CD4-positive, alpha-beta T cell (primary cell): ENCODE measurements at regions of chr10 and their contacts with region 1.

Region 1: GRCh38 chr10:97498076-97498840 is at the start of gene MMS19:
- DNase-seq: peak; percentile 98 to 100 (median 99)
- ATAC-seq: peak; percentile 72
- H3K4me3 ChIP-seq: peak within 1 kb of the TSS; percentile 91
- H3K4me3 Mint-ChIP-seq: peak within 1 kb of the TSS; percentile 99
- H3K27ac ChIP-seq: peak within 1 kb of the TSS; percentile 75 to 83
- H3K27ac Mint-ChIP-seq: peak within 1 kb of the TSS; percentile 91
- H3K4me1 ChIP-seq: peaks cover 42% of the 10 kb centered on the region
- H3K4me1 Mint-ChIP-seq: peaks cover 52% of the 10 kb centered on the region
- H3K27me3 ChIP-seq: peaks cover 0 to 2% of the 10 kb centered on the region in 2 experiments
- H3K27me3 Mint-ChIP-seq: peaks cover 15% of the 10 kb centered on the region
- CTCF ChIP-seq: no peak
- total RNA-seq, gene MMS19: 58.4 to 65.7 TPM

Region 2: DNA sequence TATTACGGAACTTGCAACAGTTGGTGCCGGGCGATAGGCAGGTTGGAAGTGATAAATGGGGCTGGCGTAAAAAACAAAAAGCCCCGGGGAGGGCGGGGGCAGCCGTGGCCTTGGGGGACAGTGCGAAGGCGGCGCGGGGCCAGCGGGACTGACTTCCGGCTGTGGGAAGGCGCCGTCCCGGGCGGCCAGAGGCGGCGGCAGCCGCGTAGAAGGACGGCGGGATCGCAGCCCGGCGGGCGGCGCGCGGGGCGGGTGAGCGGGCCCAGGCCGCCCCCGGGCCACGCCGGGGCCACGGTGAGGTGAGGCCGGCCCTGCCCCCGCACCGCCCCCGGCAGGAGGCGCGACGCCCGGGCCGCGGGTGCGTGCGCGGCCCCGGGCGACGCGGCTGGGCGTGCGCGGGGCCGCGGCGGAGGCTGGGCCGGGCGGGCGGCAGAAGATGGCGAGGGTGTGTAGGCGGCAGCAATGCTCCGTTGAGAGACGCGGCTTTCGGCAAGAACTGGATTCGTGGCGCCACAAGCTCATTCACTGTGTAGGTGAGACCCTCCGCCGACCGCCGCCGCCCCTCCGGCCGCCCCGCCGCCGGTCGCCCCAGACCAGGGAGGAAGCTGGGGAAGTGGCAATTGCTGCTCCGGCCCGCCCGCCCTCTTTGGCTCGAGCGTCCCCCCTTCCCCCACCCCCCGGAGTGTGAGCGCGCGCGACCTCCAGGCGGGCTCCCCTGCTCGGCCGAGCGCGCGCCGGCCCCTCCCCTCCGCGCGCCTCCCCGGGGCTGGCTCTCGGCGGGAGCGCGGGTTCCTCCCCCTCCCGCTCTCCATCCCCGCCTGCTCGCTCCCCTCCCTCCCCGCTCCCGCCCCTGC is 666.2 kb before region 1 on chr10 and contains the start of gene LCOR:
- CTCF ChIA-PET with region 1: no interaction called
- POLR2A ChIA-PET with region 1: no interaction called
- intact Hi-C with region 1: loop called in 1 of 2 experiments (anchors 5 kb)
- DNase-seq: peak; percentile 62 to 94 (median 78)
- ATAC-seq: peak; percentile 65
- H3K4me3 ChIP-seq: peak within 1 kb of the TSS; percentile 71
- H3K4me3 Mint-ChIP-seq: peak within 1 kb of the TSS; percentile 94
- H3K27ac ChIP-seq: peak within 1 kb of the TSS; percentile 78 to 80
- H3K27ac Mint-ChIP-seq: peak within 1 kb of the TSS; percentile 94
- H3K4me1 ChIP-seq: peaks cover 12% of the 10 kb centered on the region
- H3K4me1 Mint-ChIP-seq: peaks cover 54% of the 10 kb centered on the region
- H3K27me3 ChIP-seq: no peaks in the 10 kb centered on the region
- H3K27me3 Mint-ChIP-seq: no peaks in the 10 kb centered on the region
- CTCF ChIP-seq: no peak
- total RNA-seq, gene LCOR: 46.0 to 56.0 TPM

Region 3: DNA sequence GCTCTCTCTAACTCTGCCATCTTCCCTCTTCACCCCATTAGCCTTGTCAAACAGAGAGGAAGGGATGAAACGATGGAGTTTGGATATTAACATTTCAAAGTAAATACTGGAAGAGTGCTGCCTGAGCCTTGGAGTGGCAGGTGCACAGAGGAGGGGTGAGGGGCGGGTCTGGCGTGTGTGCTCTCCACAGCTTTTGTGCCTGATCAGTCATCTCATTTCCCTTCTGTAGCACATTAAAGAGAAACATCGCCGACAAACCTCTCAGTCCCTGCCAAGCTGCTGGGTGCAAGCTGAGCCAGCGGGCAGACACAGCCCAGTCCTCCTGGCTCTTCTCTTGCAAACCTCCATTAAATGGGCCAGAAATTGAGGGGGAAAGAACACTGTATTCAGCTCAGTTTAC is 388.7 kb before region 1 on chr10:
- CTCF ChIA-PET with region 1: no interaction called
- POLR2A ChIA-PET with region 1: no interaction called
- intact Hi-C with region 1: no loop called
- DNase-seq: no peak
- ATAC-seq: no peak
- H3K4me3 ChIP-seq: no peak overlapping the region
- H3K4me3 Mint-ChIP-seq: no peak overlapping the region
- H3K27ac ChIP-seq: no peak overlapping the region
- H3K27ac Mint-ChIP-seq: no peak overlapping the region
- H3K4me1 ChIP-seq: no peaks in the 10 kb centered on the region
- H3K4me1 Mint-ChIP-seq: no peaks in the 10 kb centered on the region
- H3K27me3 ChIP-seq: no peaks in the 10 kb centered on the region
- H3K27me3 Mint-ChIP-seq: no peaks in the 10 kb centered on the region
- CTCF ChIP-seq: no peak

Region 4: GRCh38 chr10:97400665-97401454 is 97.4 kb before region 1 on chr10 and contains the start of gene RRP12:
- CTCF ChIA-PET with region 1: interaction called, 3 read pairs
- POLR2A ChIA-PET with region 1: interaction called, 4 read pairs
- intact Hi-C with region 1: loop called in 1 of 2 experiments (anchors 5 kb)
- DNase-seq: peak; percentile 64 to 98 (median 72)
- ATAC-seq: peak; percentile 95
- H3K4me3 ChIP-seq: peak within 1 kb of the TSS; percentile 85
- H3K4me3 Mint-ChIP-seq: peak within 1 kb of the TSS; percentile 95
- H3K27ac ChIP-seq: peak within 1 kb of the TSS; percentile 81 to 97
- H3K27ac Mint-ChIP-seq: peak within 1 kb of the TSS; percentile 89
- H3K4me1 ChIP-seq: peaks cover 17% of the 10 kb centered on the region
- H3K4me1 Mint-ChIP-seq: peaks cover 16% of the 10 kb centered on the region
- H3K27me3 ChIP-seq: no peaks in the 10 kb centered on the region
- H3K27me3 Mint-ChIP-seq: no peaks in the 10 kb centered on the region
- CTCF ChIP-seq: peak; percentile 5
- total RNA-seq, gene RRP12: 84.2 to 87.6 TPM

Region 5: GRCh38 chr10:97463363-97464132 is 34.7 kb before region 1 on chr10:
- CTCF ChIA-PET with region 1: interaction called, 3 read pairs
- POLR2A ChIA-PET with region 1: no interaction called
- intact Hi-C with region 1: loop called in 1 of 2 experiments (anchors 2 kb)
- DNase-seq: peak in 10 of 14 experiments; percentile 12 to 71 (median 22)
- ATAC-seq: peak; percentile 89
- H3K4me3 ChIP-seq: no peak overlapping the region
- H3K4me3 Mint-ChIP-seq: no peak overlapping the region
- H3K27ac ChIP-seq: no peak overlapping the region
- H3K27ac Mint-ChIP-seq: peak overlapping the region; percentile 56
- H3K4me1 ChIP-seq: no peaks in the 10 kb centered on the region
- H3K4me1 Mint-ChIP-seq: no peaks in the 10 kb centered on the region
- H3K27me3 ChIP-seq: no peaks in the 10 kb centered on the region
- H3K27me3 Mint-ChIP-seq: no peaks in the 10 kb centered on the region
- CTCF ChIP-seq: peak; percentile 83

Region 6: GRCh38 chr10:97640174-97640867 is 142.1 kb after region 1 on chr10 and contains the start of gene PI4K2A:
- CTCF ChIA-PET with region 1: no interaction called
- POLR2A ChIA-PET with region 1: no interaction called
- intact Hi-C with region 1: loop called in 1 of 2 experiments (anchors 1 kb)
- DNase-seq: peak; percentile 96 to 100 (median 98)
- ATAC-seq: peak; percentile 97
- H3K4me3 ChIP-seq: peak within 1 kb of the TSS; percentile 65
- H3K4me3 Mint-ChIP-seq: peak within 1 kb of the TSS; percentile 98
- H3K27ac ChIP-seq: no peak within 1 kb of the TSS
- H3K27ac Mint-ChIP-seq: peak within 1 kb of the TSS; percentile 88
- H3K4me1 ChIP-seq: peaks cover 15% of the 10 kb centered on the region
- H3K4me1 Mint-ChIP-seq: peaks cover 26% of the 10 kb centered on the region
- H3K27me3 ChIP-seq: no peaks in the 10 kb centered on the region
- H3K27me3 Mint-ChIP-seq: no peaks in the 10 kb centered on the region
- CTCF ChIP-seq: no peak
- total RNA-seq, gene PI4K2A: 26.3 to 27.2 TPM

Region 7: GRCh38 chr10:99430451-99431189 is 1932.4 kb after region 1 on chr10 and contains the start of gene GOT1:
- CTCF ChIA-PET with region 1: no interaction called
- POLR2A ChIA-PET with region 1: no interaction called
- intact Hi-C with region 1: loop called in 1 of 2 experiments (anchors 10 kb)
- DNase-seq: peak; percentile 79 to 98 (median 87)
- ATAC-seq: peak; percentile 93
- H3K4me3 ChIP-seq: peak within 1 kb of the TSS; percentile 93
- H3K4me3 Mint-ChIP-seq: peak within 1 kb of the TSS; percentile 91
- H3K27ac ChIP-seq: peak within 1 kb of the TSS; percentile 52 to 67
- H3K27ac Mint-ChIP-seq: peak within 1 kb of the TSS; percentile 95
- H3K4me1 ChIP-seq: peaks cover 17% of the 10 kb centered on the region
- H3K4me1 Mint-ChIP-seq: peaks cover 47% of the 10 kb centered on the region
- H3K27me3 ChIP-seq: no peaks in the 10 kb centered on the region
- H3K27me3 Mint-ChIP-seq: no peaks in the 10 kb centered on the region
- CTCF ChIP-seq: no peak
- total RNA-seq, gene GOT1: 3.5 to 5.7 TPM